ENCODE measurements at regions of chr15 and their contacts with region 1.

Region 1: GRCh38 chr15:63354821-63355650 is 26.6 kb downstream of the CA12 start:
- DNase-seq: no peak
- ATAC-seq: no peak
- H3K4me3 ChIP-seq: no peak overlapping the region
- H3K4me3 Mint-ChIP-seq: no peak overlapping the region
- H3K27ac ChIP-seq: no peak overlapping the region
- H3K27ac Mint-ChIP-seq: no peak overlapping the region
- H3K4me1 ChIP-seq: no peaks in the 10 kb centered on the region
- H3K4me1 Mint-ChIP-seq: no peaks in the 10 kb centered on the region
- H3K27me3 ChIP-seq: no peaks in the 10 kb centered on the region
- H3K27me3 Mint-ChIP-seq: no peaks in the 10 kb centered on the region
- CTCF ChIP-seq: no peak

Region 2: GRCh38 chr15:63334821-63335220 is 20.2 kb before region 1 on chr15:
- CTCF ChIA-PET with region 1: no interaction called
- POLR2A ChIA-PET with region 1: no interaction called
- intact Hi-C with region 1: loop called in 1 of 2 experiments (anchors 1 kb)
- DNase-seq: no peak
- ATAC-seq: no peak
- H3K4me3 ChIP-seq: no peak overlapping the region
- H3K4me3 Mint-ChIP-seq: no peak overlapping the region
- H3K27ac ChIP-seq: no peak overlapping the region
- H3K27ac Mint-ChIP-seq: no peak overlapping the region
- H3K4me1 ChIP-seq: no peaks in the 10 kb centered on the region
- H3K4me1 Mint-ChIP-seq: no peaks in the 10 kb centered on the region
- H3K27me3 ChIP-seq: no peaks in the 10 kb centered on the region
- H3K27me3 Mint-ChIP-seq: no peaks in the 10 kb centered on the region
- CTCF ChIP-seq: no peak